ENCODE measurements at regions of chr20 and their contacts with region 1.

Region 1: GRCh38 chr20:48620519-48621254 is 207.1 kb downstream of the PREX1 start:
- DNase-seq: peak; percentile 98
- H3K27ac ChIP-seq: peak overlapping the region; percentile 91
- CTCF ChIP-seq: peak; percentile 98

Region 2: DNA sequence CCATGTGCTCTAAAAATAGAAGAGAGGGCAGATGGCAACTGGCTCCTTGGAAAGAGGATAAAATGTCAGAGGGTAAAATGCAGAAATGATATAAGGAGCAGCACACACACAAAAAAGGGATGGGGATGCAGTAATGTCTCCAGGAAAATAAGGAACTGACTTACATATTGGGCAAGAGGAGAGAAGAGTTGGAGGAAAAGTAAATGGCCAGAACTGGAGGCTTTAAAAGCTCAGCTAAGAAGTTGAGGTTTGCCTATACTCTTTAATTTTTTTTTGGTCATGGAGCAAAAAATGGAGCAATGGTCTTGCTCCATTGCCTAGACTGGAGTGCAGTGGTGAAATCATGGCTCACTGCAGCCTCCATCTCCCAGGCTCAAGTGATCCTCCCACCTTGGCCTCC is 929.1 kb before region 1 on chr20:
- CTCF ChIA-PET with region 1: interaction called, 10 read pairs
- POLR2A ChIA-PET with region 1: no interaction called
- DNase-seq: no peak
- H3K27ac ChIP-seq: no peak overlapping the region
- CTCF ChIP-seq: no peak

Region 3: GRCh38 chr20:48188657-48189551 is 431.8 kb before region 1 on chr20:
- CTCF ChIA-PET with region 1: interaction called, 18 read pairs
- POLR2A ChIA-PET with region 1: no interaction called
- DNase-seq: peak; percentile 92
- H3K27ac ChIP-seq: peak overlapping the region; percentile 85; the same call in 1 of the 2 replicates
- CTCF ChIP-seq: no peak; the same call in 1 of the 2 replicates

Region 4: GRCh38 chr20:48375815-48376583 is 244.7 kb before region 1 on chr20:
- CTCF ChIA-PET with region 1: interaction called, 12 read pairs
- POLR2A ChIA-PET with region 1: no interaction called
- DNase-seq: no peak
- H3K27ac ChIP-seq: no peak overlapping the region
- CTCF ChIP-seq: no peak

Region 5: DNA sequence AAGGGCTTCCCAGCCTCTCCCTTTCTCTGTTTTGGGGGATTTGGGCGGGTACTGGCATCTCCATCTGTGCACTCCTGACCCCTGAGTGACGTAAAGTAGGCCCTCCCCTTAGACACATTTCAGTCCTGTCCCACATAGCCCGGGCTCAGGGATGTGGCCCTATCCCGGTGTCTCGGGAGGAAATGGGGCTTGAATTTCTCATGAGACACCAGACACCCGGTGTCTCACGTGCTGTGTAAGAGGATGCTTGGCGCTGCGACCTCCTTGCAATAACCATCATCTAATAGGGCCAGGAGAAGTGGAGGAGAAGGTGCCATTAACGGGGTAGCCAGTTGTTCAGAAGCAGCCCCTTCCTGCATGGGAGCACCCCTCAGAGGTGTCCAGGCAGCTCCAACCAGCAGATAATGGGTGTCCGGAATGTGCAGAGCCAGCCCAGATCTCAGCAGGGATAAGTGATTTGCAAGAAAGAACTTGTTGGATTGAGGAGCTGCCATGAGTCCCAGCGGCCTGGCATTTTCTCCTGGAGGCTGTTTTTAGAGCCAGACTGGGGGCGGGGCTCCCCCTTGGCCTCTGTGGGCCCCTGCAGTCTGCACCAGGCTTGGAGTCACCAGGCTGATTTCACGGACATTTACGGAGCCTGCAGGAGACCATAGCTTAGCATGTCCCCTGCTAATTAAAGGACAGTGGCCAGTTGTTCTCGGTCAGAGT is 164.9 kb before region 1 on chr20:
- CTCF ChIA-PET with region 1: interaction called, 31 read pairs
- POLR2A ChIA-PET with region 1: no interaction called
- DNase-seq: peak; percentile 86
- H3K27ac ChIP-seq: peak overlapping the region; percentile 82
- CTCF ChIP-seq: no peak

Region 6: DNA sequence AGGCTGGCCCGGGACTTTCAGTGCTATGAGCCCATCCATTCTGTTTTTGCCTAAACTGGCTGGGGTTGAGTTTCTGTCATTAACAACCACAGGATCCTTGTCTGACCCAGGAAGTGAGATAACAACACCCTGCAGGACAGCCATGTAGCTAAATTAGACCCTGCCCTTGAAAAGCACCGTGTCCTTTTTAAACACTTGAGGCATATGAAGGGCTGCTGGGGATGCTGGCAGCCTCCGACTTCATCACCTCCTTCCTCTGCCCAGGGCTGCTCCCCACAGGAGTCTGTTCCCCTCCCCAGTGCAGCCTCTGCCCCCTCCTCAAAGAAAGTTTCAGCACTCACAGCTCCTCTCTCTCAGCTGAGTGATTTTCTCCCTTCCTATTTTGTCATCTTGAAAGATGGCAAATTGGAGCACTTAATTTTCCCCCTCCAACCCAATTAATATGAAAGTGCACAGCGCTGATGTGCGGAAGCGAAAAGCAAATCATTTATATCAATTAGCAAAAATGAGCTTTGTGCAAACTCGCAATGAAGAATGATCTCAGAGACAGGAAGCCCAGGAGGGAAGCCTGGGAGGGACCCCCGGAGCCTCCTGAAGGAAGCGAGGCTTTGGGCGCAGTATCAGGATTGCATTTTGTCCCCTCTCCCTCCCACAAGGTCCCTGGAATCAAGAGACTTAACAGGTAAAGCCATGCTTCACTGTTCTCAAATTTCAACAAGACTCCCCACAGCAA is 38.6 kb before region 1 on chr20:
- CTCF ChIA-PET with region 1: interaction called, 10 read pairs
- POLR2A ChIA-PET with region 1: no interaction called
- DNase-seq: no peak
- H3K27ac ChIP-seq: no peak overlapping the region
- CTCF ChIP-seq: no peak

Region 7: GRCh38 chr20:48650951-48651670 is 30.4 kb after region 1 on chr20:
- CTCF ChIA-PET with region 1: no interaction called
- POLR2A ChIA-PET with region 1: no interaction called
- DNase-seq: no peak
- H3K27ac ChIP-seq: no peak overlapping the region
- CTCF ChIP-seq: no peak

Region 8: DNA sequence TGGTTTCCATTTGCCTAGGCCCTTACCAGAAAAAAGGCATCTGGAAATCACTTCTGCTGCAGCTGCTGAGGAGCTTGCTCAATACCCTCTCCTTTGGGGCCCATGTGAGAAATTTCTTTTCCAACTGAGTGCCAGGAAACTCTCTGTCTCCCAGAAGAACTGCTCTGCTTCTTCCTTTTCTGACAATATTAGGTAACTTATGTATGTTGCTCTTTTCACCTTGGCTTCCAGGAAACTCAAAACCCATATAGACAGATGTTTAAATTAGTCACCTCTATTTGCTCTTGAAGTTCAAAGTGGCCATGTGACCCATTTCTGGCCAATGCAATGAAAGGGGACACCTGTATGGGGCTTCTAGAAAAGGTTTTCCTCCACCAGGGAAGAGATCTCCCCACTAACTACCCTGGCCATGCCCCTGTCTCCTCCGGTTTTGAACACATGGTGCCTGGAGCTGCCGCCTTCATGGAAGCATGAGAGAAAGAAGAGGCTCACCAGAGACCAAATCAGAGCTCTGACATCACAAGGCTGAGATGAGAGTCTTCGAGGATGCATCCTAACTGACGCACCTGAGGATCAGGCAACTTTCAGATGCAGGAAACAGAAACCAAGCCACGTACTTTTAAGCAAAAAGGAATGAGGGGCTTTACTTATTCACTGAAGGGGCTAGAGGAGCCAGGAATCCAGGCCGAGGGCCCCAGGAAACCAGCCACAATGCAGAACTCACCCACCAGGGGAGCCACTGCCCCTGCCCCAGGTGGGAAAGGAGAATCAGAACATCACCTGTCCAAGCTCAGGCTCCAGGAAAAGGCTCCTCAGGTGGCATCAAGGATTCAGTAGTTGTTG is 85.7 kb after region 1 on chr20:
- CTCF ChIA-PET with region 1: no interaction called
- POLR2A ChIA-PET with region 1: no interaction called
- DNase-seq: no peak
- H3K27ac ChIP-seq: no peak overlapping the region
- CTCF ChIP-seq: no peak

Region 9: GRCh38 chr20:48866502-48867335 is 246.0 kb after region 1 on chr20:
- CTCF ChIA-PET with region 1: no interaction called
- POLR2A ChIA-PET with region 1: no interaction called
- DNase-seq: no peak
- H3K27ac ChIP-seq: no peak overlapping the region
- CTCF ChIP-seq: no peak

Region 10: DNA sequence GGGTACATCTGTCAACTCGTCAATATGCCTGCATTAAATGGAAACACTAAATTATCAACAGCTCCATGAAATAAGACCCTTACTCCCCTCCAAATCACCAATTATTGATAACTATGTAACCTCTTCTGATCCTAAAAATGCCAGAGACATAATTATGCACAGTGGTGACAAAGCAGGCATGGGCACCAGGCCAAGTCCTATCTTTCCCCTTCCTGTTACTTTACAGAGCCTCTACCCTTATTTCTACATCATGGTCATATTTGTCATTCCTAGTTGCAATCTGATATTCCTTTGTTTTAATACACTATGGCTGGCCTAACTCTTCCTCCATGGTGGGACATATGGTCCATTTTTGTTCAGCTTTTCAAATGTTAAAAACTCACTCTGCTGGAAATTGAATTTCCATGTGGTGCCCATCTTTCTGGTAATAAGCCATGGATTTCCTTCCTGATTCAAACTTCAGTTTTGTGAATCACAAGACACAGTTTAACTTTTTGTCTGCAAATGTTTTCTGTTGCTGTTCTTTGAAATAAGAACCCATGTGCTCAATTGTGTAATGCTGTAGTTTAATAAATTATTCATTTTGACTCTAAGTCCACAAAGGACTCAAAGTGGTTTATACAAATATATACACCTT is 259.0 kb after region 1 on chr20:
- CTCF ChIA-PET with region 1: interaction called, 10 read pairs
- POLR2A ChIA-PET with region 1: no interaction called
- DNase-seq: no peak
- H3K27ac ChIP-seq: no peak overlapping the region
- CTCF ChIP-seq: no peak